WTC11 (cell line): ENCODE measurements at regions of chr10 and their contacts with region 1.

Region 1: GRCh38 chr10:36880898-36881297 is 244.5 kb upstream of the ANKRD30A start:
- DNase-seq: no peak
- ATAC-seq: no peak
- H3K4me3 Mint-ChIP-seq: no peak overlapping the region
- H3K27ac Mint-ChIP-seq: no peak overlapping the region
- H3K4me1 Mint-ChIP-seq: no peaks in the 10 kb centered on the region
- H3K27me3 Mint-ChIP-seq: peaks cover 5% of the 10 kb centered on the region; the same call in 1 of the 2 replicates
- CTCF ChIP-seq: no peak

Region 2: GRCh38 chr10:36779234-36779846 is 101.6 kb before region 1 on chr10:
- CTCF ChIA-PET with region 1: interaction called, 8 read pairs
- POLR2A ChIA-PET with region 1: interaction called, 15 read pairs
- DNase-seq: peak; percentile 24
- ATAC-seq: peak; percentile 87
- H3K4me3 Mint-ChIP-seq: no peak overlapping the region
- H3K27ac Mint-ChIP-seq: no peak overlapping the region
- H3K4me1 Mint-ChIP-seq: peaks cover 6% of the 10 kb centered on the region
- H3K27me3 Mint-ChIP-seq: no peaks in the 10 kb centered on the region
- CTCF ChIP-seq: no peak

Region 3: GRCh38 chr10:37146443-37146842 is 265.5 kb after region 1 on chr10:
- CTCF ChIA-PET with region 1: no interaction called
- POLR2A ChIA-PET with region 1: no interaction called
- DNase-seq: no peak
- ATAC-seq: peak; percentile 24; the same call in 1 of the 2 replicates
- H3K4me3 Mint-ChIP-seq: no peak overlapping the region
- H3K27ac Mint-ChIP-seq: no peak overlapping the region
- H3K4me1 Mint-ChIP-seq: no peaks in the 10 kb centered on the region
- H3K27me3 Mint-ChIP-seq: peaks cover 92% of the 10 kb centered on the region
- CTCF ChIP-seq: no peak